ENCODE measurements at regions of chr14 and their contacts with region 1.

Region 1: DNA sequence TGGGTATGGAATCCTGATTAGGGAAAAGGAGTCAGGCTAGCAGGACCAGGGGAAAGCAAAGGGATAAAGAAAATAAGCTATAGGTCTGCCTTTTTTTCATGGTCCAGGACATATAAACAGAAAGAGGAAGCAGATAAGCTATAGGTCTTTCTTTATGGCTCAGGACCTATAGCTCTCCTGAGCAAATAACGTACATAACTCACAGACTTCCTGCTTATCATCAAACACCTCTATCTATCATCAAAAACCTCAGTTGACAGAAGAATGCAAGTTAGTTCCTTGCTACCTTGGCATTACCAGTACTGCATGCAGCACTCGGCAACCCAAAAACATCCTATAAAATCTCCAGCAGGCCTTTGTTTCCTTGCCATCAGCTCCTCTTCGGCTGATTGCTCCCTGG is 238.7 kb upstream of the OR4E1 start:
- DNase-seq: no peak
- CTCF ChIP-seq: no peak

Region 2: GRCh38 chr14:21924479-21924878 is 12.1 kb after region 1 on chr14:
- CTCF ChIA-PET with region 1: interaction called, 14 read pairs
- POLR2A ChIA-PET with region 1: no interaction called
- DNase-seq: no peak
- CTCF ChIP-seq: no peak